ENCODE measurements at regions of chr11 and their contacts with region 1.

Region 1: GRCh38 chr11:46588131-46588530 is 5.7 kb downstream of the AMBRA1 start:
- DNase-seq: no peak
- H3K4me3 ChIP-seq: no peak overlapping the region
- H3K27ac ChIP-seq: no peak overlapping the region
- H3K4me1 ChIP-seq: peaks cover 16 to 46% (median 34%) of the 10 kb centered on the region in 4 donors
- H3K27me3 ChIP-seq: no peaks in the 10 kb centered on the region
- CTCF ChIP-seq: no peak
- EP300 ChIP-seq: no peak
- POLR2A ChIP-seq: no peak

Region 2: GRCh38 chr11:46565232-46565840 is 22.8 kb before region 1 on chr11:
- in situ Hi-C with region 1: no loop called
- intact Hi-C with region 1: loop called (anchors 1 kb)
- DNase-seq: no peak
- H3K4me3 ChIP-seq: no peak overlapping the region
- H3K27ac ChIP-seq: no peak overlapping the region
- H3K4me1 ChIP-seq: peaks cover 5 to 24% (median 12%) of the 10 kb centered on the region in 4 donors
- H3K27me3 ChIP-seq: no peaks in the 10 kb centered on the region
- CTCF ChIP-seq: no peak
- EP300 ChIP-seq: no peak
- POLR2A ChIP-seq: no peak